Left cardiac atrium (tissue), 4 donors: ENCODE measurements at regions of chr7 and their contacts with region 1.

Region 1: GRCh38 chr7:95871078-95871782 is 98.9 kb downstream of the DYNC1I1 start:
- DNase-seq: no peak
- ATAC-seq: peak; percentile 64 to 68

Region 2: GRCh38 chr7:95511716-95512260 is 359.4 kb before region 1 on chr7:
- intact Hi-C with region 1: loop called in 1 of 2 experiments (anchors 10 kb)
- DNase-seq: peak; percentile 62
- ATAC-seq: peak; percentile 88 to 91

Region 3: GRCh38 chr7:95577137-95577536 is 294.1 kb before region 1 on chr7:
- intact Hi-C with region 1: no loop called
- DNase-seq: no peak
- ATAC-seq: no peak

Region 4: DNA sequence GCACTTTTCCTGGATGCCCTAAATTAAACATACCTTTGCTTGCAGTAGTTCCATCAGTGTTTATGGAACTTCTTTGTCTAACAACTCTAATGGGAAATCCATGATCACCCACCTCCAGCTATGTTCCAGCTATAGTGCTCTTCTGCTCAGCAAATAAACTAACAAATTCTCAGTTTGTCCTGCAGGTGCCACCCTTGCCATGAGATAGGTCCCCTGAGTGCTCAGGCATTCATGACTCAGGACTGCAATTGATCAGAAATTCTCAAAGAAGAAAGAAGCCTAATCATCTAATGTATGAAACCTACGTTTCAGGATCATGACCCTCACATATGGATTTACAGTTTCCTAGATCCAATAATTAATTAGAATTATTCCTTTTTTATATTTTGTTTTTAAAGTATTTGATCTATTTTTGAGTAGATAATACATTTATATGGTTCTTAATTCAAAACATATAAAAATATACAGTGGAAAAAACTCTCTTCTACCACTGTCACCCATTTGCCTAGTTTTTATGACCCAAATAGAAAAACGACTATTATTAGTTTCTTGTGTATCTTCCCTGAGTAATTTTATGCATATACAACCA is 147.5 kb before region 1 on chr7:
- intact Hi-C with region 1: loop called (anchors 1 to 5 kb)
- DNase-seq: no peak
- ATAC-seq: peak; percentile 70 to 76

Region 5: GRCh38 chr7:95777269-95777668 is 94.0 kb before region 1 on chr7:
- intact Hi-C with region 1: no loop called
- DNase-seq: no peak
- ATAC-seq: no peak

Region 6: DNA sequence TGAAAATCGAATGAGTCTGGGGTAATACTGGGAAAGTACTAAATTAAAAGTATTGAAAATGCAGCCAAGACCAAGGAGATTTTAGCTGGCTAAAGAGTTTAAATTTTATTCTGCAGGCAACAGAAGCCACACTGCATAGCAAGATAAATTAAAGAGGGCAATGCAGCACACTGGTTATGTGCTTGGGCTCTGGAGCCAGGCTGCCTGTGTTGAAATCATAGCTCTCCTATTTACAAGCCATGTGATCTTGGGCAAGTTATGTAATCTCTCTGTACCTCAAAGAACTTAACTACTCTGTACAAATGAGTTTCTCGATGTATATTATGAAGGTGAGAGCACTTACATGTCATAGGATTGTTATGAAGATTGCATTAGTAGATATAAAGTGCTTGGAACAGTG is 440.7 kb after region 1 on chr7:
- intact Hi-C with region 1: no loop called
- DNase-seq: peak; percentile 48
- ATAC-seq: peak; percentile 74 to 89